Activated B cell treated with CpG ODN at 0.5 μM for 24 hours (primary cell): ENCODE measurements at regions of chr20 and their contacts with region 1.

Region 1: GRCh38 chr20:23350196-23350903 is at the start of gene NXT1:
- DNase-seq: peak; percentile 94
- ATAC-seq: peak; percentile 80
- H3K4me3 Mint-ChIP-seq: peak within 1 kb of the TSS; percentile 99
- H3K27ac Mint-ChIP-seq: peak within 1 kb of the TSS; percentile 100
- H3K4me1 Mint-ChIP-seq: peaks cover 32% of the 10 kb centered on the region
- H3K27me3 Mint-ChIP-seq: no peaks in the 10 kb centered on the region
- CTCF ChIP-seq: no peak
- total RNA-seq, gene NXT1: 28.8 and 30.2 TPM in 2 replicates

Region 2: GRCh38 chr20:23366384-23366783 is 16.0 kb after region 1 on chr20:
- CTCF ChIA-PET with region 1: interaction called, 4 read pairs
- POLR2A ChIA-PET with region 1: interaction called, 140 read pairs
- intact Hi-C with region 1: loop called (anchors 1 kb)
- DNase-seq: no peak
- ATAC-seq: no peak
- H3K4me3 Mint-ChIP-seq: peak overlapping the region; percentile 50
- H3K27ac Mint-ChIP-seq: peak overlapping the region; percentile 43
- H3K4me1 Mint-ChIP-seq: peaks cover 50% of the 10 kb centered on the region
- H3K27me3 Mint-ChIP-seq: no peaks in the 10 kb centered on the region
- CTCF ChIP-seq: no peak

Region 3: DNA sequence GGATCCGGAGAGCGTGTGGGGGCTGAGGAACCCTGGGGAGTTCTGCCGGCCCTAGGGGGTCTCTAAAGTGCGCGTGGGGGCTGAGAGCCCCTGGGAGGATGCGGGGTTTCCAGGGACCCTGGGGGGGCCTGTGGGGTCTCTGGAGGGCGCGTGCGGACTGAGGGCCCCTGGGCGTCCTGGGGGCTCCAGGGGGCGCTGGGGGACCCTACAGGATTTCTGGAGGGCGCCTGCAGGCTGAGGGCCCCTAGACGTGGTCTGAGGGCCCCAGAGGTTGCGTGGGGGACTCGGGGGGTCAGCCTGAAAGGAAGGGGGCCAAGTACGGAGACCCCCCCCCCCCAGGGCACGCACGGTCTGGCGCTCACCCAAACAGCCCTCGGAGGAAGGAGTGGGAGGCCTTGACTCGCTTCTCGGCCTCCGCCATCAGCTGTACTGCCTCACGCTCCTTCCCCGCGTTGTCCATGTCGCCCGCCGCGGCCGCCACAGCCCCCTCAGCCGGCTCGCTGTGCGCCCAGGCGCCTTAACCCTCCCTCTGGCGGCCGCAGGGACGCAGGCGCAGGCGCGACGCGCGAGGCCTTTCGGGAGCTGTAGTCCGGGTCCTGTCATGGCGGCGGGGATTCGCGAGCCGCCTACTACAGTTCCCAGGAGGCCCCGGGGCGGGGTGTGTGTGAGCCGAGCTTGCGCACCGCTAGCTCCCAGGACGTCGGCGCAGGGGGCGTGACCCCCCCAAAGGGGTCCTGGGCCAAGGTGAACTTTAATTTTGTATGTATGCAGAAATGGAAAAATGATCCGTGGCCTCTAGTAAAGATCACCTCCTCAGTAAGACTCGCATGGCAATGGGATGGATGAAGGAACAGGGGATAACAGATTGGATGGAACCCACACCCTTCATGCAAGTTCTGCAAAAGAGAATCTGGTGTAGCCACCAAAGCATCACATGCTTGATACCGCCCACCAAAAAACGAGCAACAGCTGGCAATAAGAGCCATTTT is 70.9 kb after region 1 on chr20 and contains the start of gene NAPB:
- CTCF ChIA-PET with region 1: interaction called, 20 read pairs
- POLR2A ChIA-PET with region 1: interaction called, 67 read pairs
- intact Hi-C with region 1: loop called (anchors 1 kb)
- DNase-seq: peak; percentile 92
- ATAC-seq: peak; percentile 99
- H3K4me3 Mint-ChIP-seq: peak within 1 kb of the TSS; percentile 82
- H3K27ac Mint-ChIP-seq: peak within 1 kb of the TSS; percentile 50
- H3K4me1 Mint-ChIP-seq: peaks cover 17% of the 10 kb centered on the region
- H3K27me3 Mint-ChIP-seq: peaks cover 13% of the 10 kb centered on the region
- CTCF ChIP-seq: no peak
- total RNA-seq, gene NAPB: 5.3 and 7.8 TPM in 2 replicates

Region 4: DNA sequence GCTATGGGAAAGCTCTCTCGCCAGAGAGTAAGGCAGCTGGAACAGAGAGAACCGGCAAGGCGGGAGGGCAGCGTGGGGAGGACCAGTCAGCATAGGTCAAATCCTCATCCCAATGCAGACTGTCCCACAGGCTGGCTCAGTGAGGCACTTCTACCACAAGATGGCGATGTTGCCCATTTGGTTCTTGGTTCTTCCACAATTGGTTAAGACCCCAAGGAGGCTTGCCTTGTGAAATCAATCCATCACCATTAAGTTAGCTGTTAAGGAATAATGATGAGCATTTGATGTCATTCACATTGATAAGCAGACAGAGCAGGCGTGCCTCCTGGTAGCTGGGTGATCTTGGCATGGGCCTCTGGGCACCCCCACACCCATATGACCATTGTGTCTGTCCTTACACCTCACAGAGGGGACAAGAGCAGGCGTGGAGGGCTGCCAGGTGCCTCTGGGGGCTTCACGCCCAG is 91.5 kb after region 1 on chr20:
- CTCF ChIA-PET with region 1: interaction called, 10 read pairs
- POLR2A ChIA-PET with region 1: interaction called, 5 read pairs
- intact Hi-C with region 1: loop called (anchors 1 kb)
- DNase-seq: peak; percentile 24
- ATAC-seq: peak; percentile 61
- H3K4me3 Mint-ChIP-seq: no peak overlapping the region
- H3K27ac Mint-ChIP-seq: no peak overlapping the region
- H3K4me1 Mint-ChIP-seq: no peaks in the 10 kb centered on the region
- H3K27me3 Mint-ChIP-seq: peaks cover 5% of the 10 kb centered on the region
- CTCF ChIP-seq: peak; percentile 57

Region 5: GRCh38 chr20:25195014-25195961 is 1844.9 kb after region 1 on chr20 and contains the start of gene ENTPD6:
- CTCF ChIA-PET with region 1: no interaction called
- POLR2A ChIA-PET with region 1: interaction called, 3 read pairs
- intact Hi-C with region 1: loop called (anchors 1 kb)
- DNase-seq: peak; percentile 99
- ATAC-seq: peak; percentile 82
- H3K4me3 Mint-ChIP-seq: peak within 1 kb of the TSS; percentile 90
- H3K27ac Mint-ChIP-seq: peak within 1 kb of the TSS; percentile 86
- H3K4me1 Mint-ChIP-seq: peaks cover 20% of the 10 kb centered on the region
- H3K27me3 Mint-ChIP-seq: no peaks in the 10 kb centered on the region
- CTCF ChIP-seq: no peak
- total RNA-seq, gene ENTPD6: 37.2 and 44.4 TPM in 2 replicates

Region 6: GRCh38 chr20:25247956-25248785 is 1897.8 kb after region 1 on chr20 and contains the start of gene PYGB:
- CTCF ChIA-PET with region 1: no interaction called
- POLR2A ChIA-PET with region 1: interaction called, 3 read pairs
- intact Hi-C with region 1: loop called (anchors 5 kb)
- DNase-seq: peak; percentile 77
- ATAC-seq: peak; percentile 87
- H3K4me3 Mint-ChIP-seq: peak within 1 kb of the TSS; percentile 94
- H3K27ac Mint-ChIP-seq: peak within 1 kb of the TSS; percentile 86
- H3K4me1 Mint-ChIP-seq: peaks cover 25% of the 10 kb centered on the region
- H3K27me3 Mint-ChIP-seq: peaks cover 10% of the 10 kb centered on the region
- CTCF ChIP-seq: no peak
- total RNA-seq, gene PYGB: 21.5 and 23.5 TPM in 2 replicates